ENCODE measurements at regions of chr19 and their contacts with region 1.

Region 1: GRCh38 chr19:6516659-6517291 is 14.1 kb upstream of the TNFSF9 start:
- DNase-seq: peak; percentile 20
- H3K4me3 ChIP-seq: peak overlapping the region; percentile 67
- H3K27ac ChIP-seq: peak overlapping the region; percentile 2
- H3K27me3 ChIP-seq: no peaks in the 10 kb centered on the region
- CTCF ChIP-seq: peak; percentile 89

Region 2: DNA sequence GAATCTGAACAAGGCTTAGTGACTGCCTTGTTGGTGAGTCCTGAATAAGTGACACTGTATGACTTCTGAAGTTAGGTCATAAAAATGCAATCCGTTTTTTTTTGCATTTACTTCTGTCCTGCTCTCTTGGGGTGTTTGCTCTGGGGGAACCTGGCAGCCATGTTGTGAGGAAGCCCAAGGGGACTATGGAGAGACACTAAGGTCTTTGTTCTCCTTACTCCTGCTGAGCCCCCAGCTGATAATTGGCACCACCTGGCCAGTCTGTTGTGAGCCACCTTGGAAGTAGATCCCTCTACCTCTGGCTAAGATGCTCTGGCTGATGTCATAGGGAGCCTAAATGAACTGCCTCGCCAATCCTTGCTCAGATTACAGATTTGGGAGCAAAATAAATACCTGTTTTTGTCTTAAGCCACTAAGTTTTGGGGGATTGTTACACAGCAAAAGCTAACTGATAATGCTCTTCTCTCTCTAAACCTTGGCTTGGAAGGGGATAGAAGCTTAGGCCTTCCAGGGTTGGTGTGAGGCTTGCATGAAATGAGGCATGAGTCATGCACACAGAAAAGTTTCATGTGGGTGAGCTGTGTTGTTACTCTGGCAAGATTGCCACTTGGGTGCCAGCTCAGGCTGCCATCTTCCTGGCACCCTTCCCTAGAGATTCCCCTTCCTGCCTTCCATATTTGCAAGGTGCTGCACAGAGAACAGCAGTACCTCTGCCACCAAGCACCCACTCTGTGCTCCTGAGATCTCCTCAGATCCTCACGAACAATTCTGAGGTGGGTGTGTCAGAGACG is 24.8 kb before region 1 on chr19:
- CTCF ChIA-PET with region 1: no interaction called
- POLR2A ChIA-PET with region 1: interaction called, 12 read pairs
- DNase-seq: no peak
- H3K4me3 ChIP-seq: no peak overlapping the region
- H3K27ac ChIP-seq: no peak overlapping the region
- H3K27me3 ChIP-seq: no peaks in the 10 kb centered on the region
- CTCF ChIP-seq: no peak

Region 3: GRCh38 chr19:6530386-6531161 is 13.8 kb after region 1 on chr19 and contains the start of gene TNFSF9:
- CTCF ChIA-PET with region 1: interaction called, 7 read pairs
- POLR2A ChIA-PET with region 1: interaction called, 10 read pairs
- DNase-seq: peak; percentile 33
- H3K4me3 ChIP-seq: peak within 1 kb of the TSS; percentile 75
- H3K27ac ChIP-seq: peak within 1 kb of the TSS; percentile 57
- H3K27me3 ChIP-seq: peaks cover 9% of the 10 kb centered on the region
- CTCF ChIP-seq: no peak
- polyA plus RNA-seq, gene TNFSF9: 0.14 and 0.16 TPM in 2 replicates

Region 4: GRCh38 chr19:6540918-6541689 is 24.3 kb after region 1 on chr19:
- CTCF ChIA-PET with region 1: no interaction called
- POLR2A ChIA-PET with region 1: no interaction called
- DNase-seq: no peak
- H3K4me3 ChIP-seq: no peak overlapping the region
- H3K27ac ChIP-seq: no peak overlapping the region
- H3K27me3 ChIP-seq: no peaks in the 10 kb centered on the region
- CTCF ChIP-seq: no peak

Region 5: GRCh38 chr19:6564393-6564792 is 47.6 kb after region 1 on chr19:
- CTCF ChIA-PET with region 1: no interaction called
- POLR2A ChIA-PET with region 1: no interaction called
- DNase-seq: no peak
- H3K4me3 ChIP-seq: no peak overlapping the region
- H3K27ac ChIP-seq: no peak overlapping the region
- H3K27me3 ChIP-seq: no peaks in the 10 kb centered on the region
- CTCF ChIP-seq: no peak

Region 6: DNA sequence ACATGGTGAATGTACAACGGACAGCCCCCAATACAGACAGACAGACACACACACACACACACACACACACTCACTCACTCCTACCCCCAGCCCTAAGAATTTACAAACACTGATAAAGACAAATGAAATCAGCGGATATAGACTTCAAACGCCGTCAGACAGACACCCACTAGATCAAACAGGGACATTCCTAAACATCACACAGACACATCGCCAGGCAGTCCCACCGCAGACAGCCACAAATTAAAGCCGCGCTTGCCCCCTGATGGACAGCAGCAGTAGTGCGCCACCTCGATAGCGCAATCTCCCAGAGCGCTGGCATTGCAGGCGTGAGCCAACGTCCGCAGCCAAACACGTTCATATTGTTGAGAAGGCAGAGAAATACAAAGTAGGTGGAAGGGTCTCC is 345.9 kb after region 1 on chr19:
- CTCF ChIA-PET with region 1: interaction called, 32 read pairs
- POLR2A ChIA-PET with region 1: no interaction called
- DNase-seq: peak; percentile 29
- H3K4me3 ChIP-seq: peak overlapping the region; percentile 22; the same call in 1 of the 2 replicates
- H3K27ac ChIP-seq: no peak overlapping the region
- H3K27me3 ChIP-seq: no peaks in the 10 kb centered on the region
- CTCF ChIP-seq: peak; percentile 88